BJ (cell line): ENCODE measurements at regions of chr9 and their contacts with region 1.

Region 1: DNA sequence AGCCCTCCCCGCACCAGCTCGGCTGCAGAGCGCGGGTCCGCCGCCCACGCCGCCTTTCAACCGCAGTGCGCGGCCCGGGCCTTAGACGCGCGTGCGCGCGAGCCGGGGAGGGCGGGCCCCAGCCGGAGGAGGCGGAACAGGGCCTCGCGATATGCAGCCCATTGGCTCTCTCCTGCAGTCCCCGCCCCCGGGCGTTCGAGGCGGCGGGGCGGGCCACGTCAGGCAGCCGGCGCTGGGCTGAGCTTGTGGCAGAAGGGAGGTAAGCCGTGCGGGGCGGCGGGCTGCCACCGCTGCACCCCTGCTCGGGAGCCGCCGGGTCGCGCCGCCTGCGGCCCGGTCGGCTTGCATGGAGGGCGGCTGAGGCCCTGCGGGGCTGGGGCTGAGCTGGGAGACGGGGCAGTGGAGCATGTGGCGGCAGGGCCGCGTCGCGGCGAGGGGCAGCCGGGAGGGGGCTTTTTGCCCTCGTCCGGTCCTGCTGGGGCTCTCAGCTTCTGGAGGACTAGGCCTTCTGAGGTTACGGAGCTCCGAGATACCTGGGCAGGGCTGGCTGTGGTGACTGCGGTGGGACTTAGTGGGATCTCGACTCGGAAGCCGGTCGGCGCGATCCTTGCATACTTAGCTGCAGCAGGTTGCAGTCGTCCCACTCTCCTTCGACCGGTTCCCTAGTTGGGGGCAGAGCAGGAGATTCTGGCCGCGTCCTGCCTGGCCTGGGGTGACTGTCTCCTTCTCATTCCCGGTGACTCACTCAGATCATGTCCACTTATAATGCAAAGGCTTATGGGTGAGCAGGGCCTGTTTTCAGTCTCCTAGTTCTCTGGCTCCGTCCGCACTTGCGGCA is at the start of gene FOCAD:
- DNase-seq: peak; percentile 65
- H3K4me3 ChIP-seq: peak within 1 kb of the TSS; percentile 79
- H3K27me3 ChIP-seq: no peaks in the 10 kb centered on the region
- CTCF ChIP-seq: no peak
- polyA plus RNA-seq, gene FOCAD: 32.9 and 42.1 TPM in 2 replicates

Region 2: DNA sequence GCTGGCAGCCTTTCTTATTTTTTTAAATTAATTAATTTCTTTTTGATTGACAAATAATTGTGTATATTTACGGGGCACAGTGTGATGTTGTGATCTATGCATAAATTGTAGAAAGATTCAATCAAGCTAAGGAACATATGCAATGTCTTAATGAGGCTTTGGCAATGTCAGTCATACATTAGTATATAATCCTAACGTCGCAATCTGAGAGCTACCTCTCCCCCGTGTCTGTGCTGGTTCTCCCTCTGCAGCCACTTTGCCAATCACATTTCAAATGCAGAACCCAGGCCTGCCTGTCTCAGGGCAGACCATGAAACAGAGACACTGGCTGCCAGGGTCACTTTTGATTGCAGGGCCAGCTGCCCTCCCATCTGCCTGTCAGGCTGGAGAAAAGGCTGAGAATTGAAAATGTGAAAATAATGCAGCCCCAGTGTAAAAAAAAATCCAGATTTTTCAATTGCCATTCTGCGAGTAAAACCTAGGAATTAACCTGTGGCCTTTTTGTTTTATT is 951.8 kb before region 1 on chr9:
- CTCF ChIA-PET with region 1: no interaction called
- POLR2A ChIA-PET with region 1: no interaction called
- DNase-seq: no peak
- H3K4me3 ChIP-seq: no peak overlapping the region
- H3K27me3 ChIP-seq: no peaks in the 10 kb centered on the region
- CTCF ChIP-seq: no peak

Region 3: DNA sequence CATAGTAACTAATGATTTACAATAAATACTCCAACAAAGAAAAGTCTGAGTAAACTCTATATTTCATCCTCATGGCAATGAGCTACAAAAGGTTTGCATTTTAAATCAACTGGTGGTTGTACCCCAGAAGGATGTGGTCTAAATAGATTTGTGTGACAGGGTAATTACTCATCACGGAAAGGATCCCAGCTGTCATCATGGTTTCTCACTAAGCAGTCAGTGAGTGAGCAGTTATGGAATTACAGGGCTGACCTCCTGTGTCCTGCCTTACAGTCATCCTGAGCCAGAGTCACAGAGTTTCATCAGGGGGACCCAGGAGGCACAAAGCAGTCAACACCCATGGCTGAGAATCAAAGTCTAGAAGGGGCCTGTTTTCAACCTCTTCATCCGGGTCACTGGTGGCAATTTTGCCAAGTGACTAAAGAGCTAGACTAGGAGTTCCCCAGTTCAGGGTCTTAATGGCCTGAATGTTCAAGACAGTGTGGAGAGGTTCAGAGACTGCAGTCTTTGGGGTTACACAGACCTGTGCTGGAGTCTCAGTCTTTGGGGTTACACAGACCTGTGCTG is 684.7 kb before region 1 on chr9:
- CTCF ChIA-PET with region 1: no interaction called
- POLR2A ChIA-PET with region 1: interaction called, 12 read pairs
- DNase-seq: peak; percentile 47
- H3K4me3 ChIP-seq: no peak overlapping the region
- H3K27me3 ChIP-seq: no peaks in the 10 kb centered on the region
- CTCF ChIP-seq: no peak